ENCODE measurements at regions of chr2 and their contacts with region 1.

Region 1: GRCh38 chr2:64273524-64274398 is 129.5 kb upstream of the PELI1 start:
- DNase-seq: peak in 1 of 2 donors; percentile 40
- ATAC-seq: peak; percentile 83 to 94 (median 90)
- H3K4me3 ChIP-seq: peak overlapping the region in 4 of 10 donors; percentile 2 to 19 (median 14)
- H3K27ac ChIP-seq: peak overlapping the region; percentile 22 to 89 (median 74)
- H3K4me1 ChIP-seq: peaks cover 6 to 50% (median 28%) of the 10 kb centered on the region in 9 donors
- H3K27me3 ChIP-seq: no peaks in the 10 kb centered on the region
- CTCF ChIP-seq: no peak

Region 2: GRCh38 chr2:63364866-63365265 is 908.9 kb before region 1 on chr2:
- intact Hi-C with region 1: no loop called
- DNase-seq: no peak
- ATAC-seq: no peak
- H3K4me3 ChIP-seq: no peak overlapping the region
- H3K27ac ChIP-seq: no peak overlapping the region
- H3K4me1 ChIP-seq: no peaks in the 10 kb centered on the region
- H3K27me3 ChIP-seq: no peaks in the 10 kb centered on the region
- CTCF ChIP-seq: no peak

Region 3: DNA sequence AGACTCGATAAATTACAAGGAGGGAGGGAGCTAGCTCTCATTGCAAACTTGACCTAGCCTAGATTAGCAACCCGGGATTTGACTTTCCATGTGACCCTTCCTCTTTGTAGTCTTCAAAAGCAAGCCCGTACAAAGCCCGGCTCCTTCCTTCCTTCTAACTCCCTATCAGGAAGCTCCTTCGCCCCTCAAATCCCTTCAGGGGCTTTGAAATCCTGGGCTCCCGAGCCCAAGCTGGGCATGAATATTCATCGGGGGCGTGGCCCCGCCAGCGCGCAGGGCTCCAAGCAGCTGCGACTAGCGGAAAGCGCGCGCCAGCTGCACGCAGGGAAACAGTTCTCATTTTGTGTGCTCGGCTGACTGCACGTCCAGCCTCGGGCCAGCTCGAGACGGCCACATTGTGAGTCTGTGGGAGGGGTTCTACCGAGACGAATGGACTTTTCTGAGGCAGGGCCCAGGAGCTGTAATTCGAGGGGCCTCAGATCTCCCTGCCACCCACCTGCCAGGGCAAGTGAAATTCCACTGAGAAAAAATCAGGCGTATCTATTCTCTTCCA is 45.6 kb before region 1 on chr2:
- intact Hi-C with region 1: loop called in 1 of 10 experiments (anchors 5 kb)
- DNase-seq: peak; percentile 86 to 87
- ATAC-seq: peak; percentile 96 to 99 (median 98)
- H3K4me3 ChIP-seq: peak overlapping the region in 9 of 10 donors; percentile 30 to 59 (median 56)
- H3K27ac ChIP-seq: peak overlapping the region; percentile 41 to 93 (median 78)
- H3K4me1 ChIP-seq: peaks cover 3 to 35% (median 16%) of the 10 kb centered on the region in 9 donors
- H3K27me3 ChIP-seq: no peaks in the 10 kb centered on the region
- CTCF ChIP-seq: peak in 2 of 9 donors; percentile 4 to 18

Region 4: DNA sequence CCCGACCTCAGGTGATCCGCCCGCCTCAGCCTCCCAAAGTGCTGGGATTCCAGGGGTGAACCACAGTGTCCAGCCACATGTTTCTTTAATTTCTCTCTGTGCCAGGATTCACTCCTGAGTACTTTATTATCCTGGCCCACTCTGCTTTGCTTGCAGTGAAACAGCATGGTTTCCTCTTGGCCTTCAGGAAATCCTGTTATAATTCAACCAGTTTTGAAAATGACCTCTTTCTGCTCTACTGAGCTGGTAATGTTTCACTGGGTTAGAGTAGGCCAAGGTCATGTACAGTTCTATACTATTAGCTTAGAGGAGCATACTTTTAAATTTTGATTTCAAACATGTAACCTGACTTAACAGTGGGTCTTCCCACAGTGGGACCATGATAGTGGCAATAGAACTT is 39.0 kb before region 1 on chr2:
- intact Hi-C with region 1: loop called in 2 of 10 experiments (anchors 5 kb)
- DNase-seq: no peak
- ATAC-seq: peak in 3 of 8 donors; percentile 7 to 31 (median 28)
- H3K4me3 ChIP-seq: no peak overlapping the region
- H3K27ac ChIP-seq: no peak overlapping the region
- H3K4me1 ChIP-seq: peaks cover 0 to 38% (median 11%) of the 10 kb centered on the region in 9 donors
- H3K27me3 ChIP-seq: no peaks in the 10 kb centered on the region
- CTCF ChIP-seq: no peak

Region 5: GRCh38 chr2:64311948-64312621 is 38.3 kb after region 1 on chr2:
- intact Hi-C with region 1: loop called in 1 of 10 experiments (anchors 5 kb)
- DNase-seq: peak; percentile 61 to 81
- ATAC-seq: peak; percentile 88 to 95 (median 93)
- H3K4me3 ChIP-seq: peak overlapping the region in 3 of 10 donors; percentile 3 to 22 (median 8)
- H3K27ac ChIP-seq: peak overlapping the region in 7 of 10 donors; percentile 7 to 71 (median 53)
- H3K4me1 ChIP-seq: peaks cover 0 to 27% (median 18%) of the 10 kb centered on the region in 9 donors
- H3K27me3 ChIP-seq: no peaks in the 10 kb centered on the region
- CTCF ChIP-seq: peak; percentile 18 to 77 (median 58)